ENCODE measurements at regions of chr17 and their contacts with region 1.

Region 1: DNA sequence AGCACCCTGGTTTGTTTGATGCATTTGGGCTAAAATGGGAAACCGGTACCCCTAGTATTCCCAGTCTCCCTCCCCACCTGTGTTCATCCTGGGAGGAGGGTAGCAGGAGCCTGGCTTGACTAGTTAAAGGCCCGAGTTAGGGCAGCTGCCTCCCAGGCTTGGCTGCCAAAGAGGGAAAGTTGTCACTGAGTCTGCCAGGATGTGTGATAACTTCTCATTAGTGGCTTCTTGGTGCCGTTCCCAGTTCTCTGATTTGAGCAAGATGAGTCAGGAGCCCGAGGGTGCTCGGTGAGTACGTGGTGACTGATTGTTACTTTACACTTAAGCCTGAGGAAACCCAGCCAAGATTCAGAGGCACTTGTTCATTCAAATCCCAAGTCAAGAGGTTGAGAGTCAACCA is 2.5 kb downstream of the KRT32 start:
- DNase-seq: no peak

Region 2: DNA sequence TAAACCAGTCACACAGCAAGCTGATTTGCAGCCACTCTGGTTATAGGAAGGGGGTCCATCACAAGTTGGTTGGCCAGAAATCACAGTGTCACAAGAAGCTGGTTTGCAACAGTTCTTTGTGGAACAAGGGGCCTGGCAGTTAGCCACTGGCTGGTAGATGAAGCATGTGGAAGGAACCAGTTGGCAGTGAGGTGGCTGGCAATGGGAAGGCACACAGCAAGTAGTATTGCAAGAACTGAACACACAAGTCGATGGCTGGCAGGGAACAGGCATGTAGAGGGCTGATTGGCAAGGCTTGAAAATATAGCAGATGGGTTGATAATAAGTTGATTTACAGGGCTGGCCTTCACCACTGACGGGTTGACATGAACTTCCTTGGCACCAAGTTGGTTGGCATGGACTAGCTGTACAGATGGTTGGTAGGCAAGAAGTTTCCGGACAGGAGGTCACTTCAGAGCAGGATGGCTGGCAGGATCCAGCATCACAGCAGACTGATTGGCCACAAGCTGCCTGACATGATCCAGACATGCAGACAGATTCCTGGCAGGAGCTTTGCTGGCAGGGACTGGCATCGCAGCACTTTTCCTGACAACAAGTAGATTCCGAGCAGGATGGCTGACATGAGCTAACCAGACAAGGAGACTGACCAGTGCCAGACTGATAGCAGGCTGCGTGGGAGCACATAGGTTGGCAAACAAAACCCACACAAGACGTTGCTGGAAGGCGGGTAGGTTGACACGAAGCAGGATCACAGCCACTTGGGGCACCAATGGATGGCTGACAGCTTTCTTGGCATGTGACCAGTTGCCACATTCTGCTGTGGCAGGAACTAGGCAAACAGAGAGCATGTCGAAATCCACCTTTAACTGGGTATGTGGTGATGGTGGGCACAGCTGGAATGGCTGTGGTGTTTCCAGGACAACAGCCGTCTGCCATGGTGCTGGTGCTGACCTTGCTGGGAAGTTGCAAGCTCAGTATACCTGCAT is 162.5 kb before region 1 on chr17 and contains the start of gene KRTAP29-1:
- intact Hi-C with region 1: loop called (anchors 2 kb)
- DNase-seq: peak; percentile 79
- total RNA-seq, gene KRTAP29-1: not detected

Measured in cardiac septum (tissue), 1 donor.